CD4-positive, alpha-beta memory T cell (primary cell): ENCODE measurements at regions of chr5 and their contacts with region 1.

Region 1: GRCh38 chr5:150436141-150436680 is 13.3 kb downstream of the RPS14 start:
- DNase-seq: peak; percentile 86 to 92 (median 88)
- H3K4me3 ChIP-seq: no peak overlapping the region
- H3K4me3 Mint-ChIP-seq: peak overlapping the region; percentile 39 to 80 (median 67)
- H3K27ac ChIP-seq: no peak overlapping the region
- H3K27ac Mint-ChIP-seq: peak overlapping the region; percentile 14 to 92 (median 90)
- H3K4me1 ChIP-seq: peaks cover 8% of the 10 kb centered on the region
- H3K4me1 Mint-ChIP-seq: peaks cover 6 to 10% (median 8%) of the 10 kb centered on the region in 4 donors
- H3K27me3 ChIP-seq: no peaks in the 10 kb centered on the region
- H3K27me3 Mint-ChIP-seq: no peaks in the 10 kb centered on the region

Region 2: GRCh38 chr5:150085950-150086715 is 350.1 kb before region 1 on chr5 and contains the start of gene CSF1R:
- CTCF ChIA-PET with region 1: no interaction called
- POLR2A ChIA-PET with region 1: no interaction called
- intact Hi-C with region 1: no loop called
- DNase-seq: no peak
- H3K4me3 ChIP-seq: no peak within 1 kb of the TSS
- H3K4me3 Mint-ChIP-seq: no peak within 1 kb of the TSS
- H3K27ac ChIP-seq: no peak within 1 kb of the TSS
- H3K27ac Mint-ChIP-seq: no peak within 1 kb of the TSS
- H3K4me1 ChIP-seq: no peaks in the 10 kb centered on the region
- H3K4me1 Mint-ChIP-seq: peaks cover 0 to 2% (median 0%) of the 10 kb centered on the region in 4 donors
- H3K27me3 ChIP-seq: peaks cover 12% of the 10 kb centered on the region
- H3K27me3 Mint-ChIP-seq: peaks cover 30 to 44% of the 10 kb centered on the region in 2 donors
- total RNA-seq, gene CSF1R: 2.4 to 2.9 TPM

Region 3: DNA sequence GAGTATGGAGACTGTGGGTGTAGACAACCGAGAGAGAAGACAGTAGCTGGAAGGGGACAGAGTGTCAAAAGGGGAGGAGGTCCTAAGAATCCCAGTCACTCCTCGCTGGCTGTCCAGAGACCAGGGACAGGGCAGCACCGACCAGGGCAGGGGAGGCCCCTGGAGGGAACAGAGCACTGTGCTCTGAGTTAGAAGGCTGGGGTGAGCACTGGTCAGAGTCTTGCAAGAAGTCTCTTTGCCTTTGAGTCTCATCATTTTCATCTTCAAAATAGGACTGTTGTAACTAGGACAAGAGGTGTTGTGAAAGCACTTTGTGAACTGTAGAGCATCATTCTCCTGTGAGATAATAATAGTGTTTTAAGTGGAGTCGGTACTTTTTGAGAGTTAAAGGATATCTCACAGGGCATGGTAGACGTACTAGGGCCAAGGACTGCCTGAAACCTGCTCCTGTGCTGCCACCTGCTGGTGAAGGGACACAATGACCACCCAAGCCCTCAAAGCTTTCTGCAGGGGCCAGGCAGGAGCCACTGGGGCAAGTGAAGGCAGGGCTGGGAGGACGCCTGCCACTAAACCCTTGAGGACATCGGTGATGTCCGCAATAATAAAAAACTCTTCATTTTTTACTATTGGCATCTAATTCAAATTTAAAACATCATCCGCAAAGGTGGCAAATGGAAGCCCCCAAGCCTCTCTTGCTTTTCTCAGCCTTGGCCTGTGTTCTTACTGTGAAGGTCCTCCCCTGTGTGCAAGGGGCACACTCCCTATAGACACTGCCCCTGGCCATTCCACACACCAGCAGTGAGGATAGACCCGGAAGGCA is 218.1 kb before region 1 on chr5:
- CTCF ChIA-PET with region 1: no interaction called
- POLR2A ChIA-PET with region 1: no interaction called
- intact Hi-C with region 1: loop called (anchors 1 kb)
- DNase-seq: peak; percentile 67 to 73 (median 71)
- H3K4me3 ChIP-seq: no peak overlapping the region
- H3K4me3 Mint-ChIP-seq: no peak overlapping the region
- H3K27ac ChIP-seq: no peak overlapping the region
- H3K27ac Mint-ChIP-seq: no peak overlapping the region
- H3K4me1 ChIP-seq: no peaks in the 10 kb centered on the region
- H3K4me1 Mint-ChIP-seq: peaks cover 0 to 5% (median under 1%) of the 10 kb centered on the region in 4 donors
- H3K27me3 ChIP-seq: no peaks in the 10 kb centered on the region
- H3K27me3 Mint-ChIP-seq: peaks cover 0 to 4% of the 10 kb centered on the region in 2 donors

Region 4: GRCh38 chr5:150350524-150351344 is 85.5 kb before region 1 on chr5:
- CTCF ChIA-PET with region 1: interaction called, 14 read pairs
- POLR2A ChIA-PET with region 1: no interaction called
- intact Hi-C with region 1: no loop called
- DNase-seq: peak; percentile 33 to 52 (median 33)
- H3K4me3 ChIP-seq: no peak overlapping the region
- H3K4me3 Mint-ChIP-seq: peak overlapping the region in 2 of 8 donors; percentile 23 to 41
- H3K27ac ChIP-seq: no peak overlapping the region
- H3K27ac Mint-ChIP-seq: peak overlapping the region; percentile 45 to 93 (median 78)
- H3K4me1 ChIP-seq: peaks cover 13% of the 10 kb centered on the region
- H3K4me1 Mint-ChIP-seq: peaks cover 6 to 14% (median 8%) of the 10 kb centered on the region in 4 donors
- H3K27me3 ChIP-seq: no peaks in the 10 kb centered on the region
- H3K27me3 Mint-ChIP-seq: peaks cover 0 to 1% of the 10 kb centered on the region in 2 donors

Region 5: DNA sequence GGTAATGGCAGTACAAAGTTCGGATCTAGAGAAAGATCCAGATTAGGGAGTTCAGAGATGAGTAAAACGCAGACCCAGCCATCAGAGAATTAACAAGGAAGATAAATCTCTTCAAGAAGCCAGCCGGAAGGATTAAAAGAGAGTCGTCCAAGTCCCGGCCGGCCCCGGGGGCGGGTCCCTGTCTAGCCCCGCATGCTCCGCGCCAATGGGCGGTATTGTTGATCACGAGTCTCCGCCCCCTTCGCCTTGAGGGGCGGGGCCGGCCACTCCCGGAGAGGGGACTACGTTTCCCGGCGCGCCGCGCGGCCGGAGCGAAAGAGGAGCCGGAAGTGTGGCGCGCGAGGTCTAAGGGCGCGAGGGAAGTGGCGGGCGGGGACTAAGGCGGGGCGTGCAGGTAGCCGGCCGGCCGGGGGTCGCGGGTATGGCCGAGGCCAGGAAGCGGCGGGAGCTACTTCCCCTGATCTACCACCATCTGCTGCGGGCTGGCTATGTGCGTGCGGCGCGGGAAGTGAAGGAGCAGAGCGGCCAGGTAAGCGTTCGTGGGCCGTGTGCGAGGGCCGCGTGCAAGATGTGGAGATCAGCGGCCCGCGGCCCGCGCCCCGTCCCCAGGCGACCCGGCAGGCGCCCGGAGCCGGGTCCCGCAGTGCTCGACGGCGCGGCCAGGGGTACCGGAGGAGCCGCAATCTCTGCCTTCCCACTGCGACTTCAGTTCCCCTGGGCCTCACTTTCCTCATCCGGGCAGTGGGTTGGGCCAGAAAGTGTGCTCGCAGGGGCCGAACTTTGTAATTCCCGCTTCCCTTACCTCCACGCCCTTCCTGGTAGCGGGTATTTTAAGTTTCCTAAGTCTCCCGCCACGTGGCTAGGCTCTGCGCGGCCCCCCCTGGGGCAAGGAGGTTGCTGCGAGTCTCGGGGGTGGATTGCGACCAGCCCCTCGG is 78.6 kb before region 1 on chr5 and contains the start of gene TCOF1:
- CTCF ChIA-PET with region 1: interaction called, 5 read pairs
- POLR2A ChIA-PET with region 1: no interaction called
- intact Hi-C with region 1: loop called (anchors 1 kb)
- DNase-seq: peak; percentile 94 to 97 (median 96)
- H3K4me3 ChIP-seq: peak within 1 kb of the TSS; percentile 66 to 76
- H3K4me3 Mint-ChIP-seq: peak within 1 kb of the TSS; percentile 88 to 93 (median 91)
- H3K27ac ChIP-seq: peak within 1 kb of the TSS; percentile 70
- H3K27ac Mint-ChIP-seq: peak within 1 kb of the TSS; percentile 68 to 98 (median 94)
- H3K4me1 ChIP-seq: peaks cover 28% of the 10 kb centered on the region
- H3K4me1 Mint-ChIP-seq: peaks cover 30 to 59% (median 41%) of the 10 kb centered on the region in 4 donors
- H3K27me3 ChIP-seq: no peaks in the 10 kb centered on the region
- H3K27me3 Mint-ChIP-seq: peaks cover 0 to 1% of the 10 kb centered on the region in 2 donors
- total RNA-seq, gene TCOF1: 53.8 to 59.9 TPM

Region 6: GRCh38 chr5:150398722-150399523 is 37.3 kb before region 1 on chr5:
- CTCF ChIA-PET with region 1: interaction called, 13 read pairs
- POLR2A ChIA-PET with region 1: no interaction called
- intact Hi-C with region 1: loop called (anchors 1 kb)
- DNase-seq: no peak
- H3K4me3 ChIP-seq: no peak overlapping the region
- H3K4me3 Mint-ChIP-seq: no peak overlapping the region
- H3K27ac ChIP-seq: no peak overlapping the region
- H3K27ac Mint-ChIP-seq: peak overlapping the region in 6 of 7 donors; percentile 22 to 86 (median 76)
- H3K4me1 ChIP-seq: no peaks in the 10 kb centered on the region
- H3K4me1 Mint-ChIP-seq: peaks cover 0 to 8% (median 0%) of the 10 kb centered on the region in 4 donors
- H3K27me3 ChIP-seq: no peaks in the 10 kb centered on the region
- H3K27me3 Mint-ChIP-seq: no peaks in the 10 kb centered on the region

Region 7: DNA sequence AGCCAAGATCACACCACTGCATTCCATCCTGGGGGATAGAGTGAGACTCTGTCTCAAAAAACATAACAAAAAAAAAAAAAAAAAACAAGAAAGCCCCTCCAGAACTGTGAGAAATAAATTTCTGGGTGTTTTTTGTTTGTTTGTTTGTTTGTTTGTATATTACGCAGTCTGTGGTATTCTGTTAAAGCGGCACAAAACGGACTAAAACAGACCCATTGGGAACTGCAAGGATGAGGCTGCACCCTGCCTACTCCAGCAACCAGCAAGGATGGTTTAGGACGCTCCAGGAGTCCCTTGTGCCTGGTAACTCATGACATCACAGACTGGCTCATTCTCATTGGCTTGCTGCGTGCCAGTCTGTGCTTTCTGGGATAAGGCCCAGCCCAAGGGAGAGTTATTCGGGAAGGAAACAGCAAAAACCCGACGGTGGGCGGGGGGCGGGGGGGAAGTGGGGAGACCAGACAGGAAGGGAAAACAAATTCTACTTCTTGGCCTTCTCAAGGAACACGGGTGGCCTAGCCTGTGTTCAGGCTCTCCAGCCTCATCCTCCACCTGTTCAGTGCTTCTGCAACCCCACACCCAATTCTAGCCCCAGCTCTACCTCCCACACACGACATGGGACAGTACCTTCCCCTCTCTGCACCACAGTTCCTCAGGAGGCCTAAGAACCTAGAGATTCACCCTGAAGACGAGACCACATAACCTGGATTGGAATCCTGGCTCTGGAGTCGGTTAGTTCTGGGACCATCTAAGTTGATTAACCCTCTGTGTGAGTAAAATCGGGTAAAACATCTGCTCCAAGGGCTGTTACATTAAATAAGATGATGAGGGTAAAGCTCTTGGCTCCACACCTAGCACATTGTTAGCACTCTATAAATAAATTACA is 26.3 kb before region 1 on chr5:
- CTCF ChIA-PET with region 1: interaction called, 48 read pairs
- POLR2A ChIA-PET with region 1: interaction called, 9 read pairs
- intact Hi-C with region 1: loop called (anchors 1 kb)
- DNase-seq: peak in 4 of 5 donors; percentile 34 to 54 (median 48)
- H3K4me3 ChIP-seq: peak overlapping the region; percentile 34 to 78
- H3K4me3 Mint-ChIP-seq: peak overlapping the region; percentile 97 to 100 (median 99)
- H3K27ac ChIP-seq: peak overlapping the region; percentile 98
- H3K27ac Mint-ChIP-seq: peak overlapping the region; percentile 99 to 100 (median 99)
- H3K4me1 ChIP-seq: peaks cover 50% of the 10 kb centered on the region
- H3K4me1 Mint-ChIP-seq: peaks cover 26 to 57% (median 38%) of the 10 kb centered on the region in 4 donors
- H3K27me3 ChIP-seq: no peaks in the 10 kb centered on the region
- H3K27me3 Mint-ChIP-seq: no peaks in the 10 kb centered on the region

Region 8: DNA sequence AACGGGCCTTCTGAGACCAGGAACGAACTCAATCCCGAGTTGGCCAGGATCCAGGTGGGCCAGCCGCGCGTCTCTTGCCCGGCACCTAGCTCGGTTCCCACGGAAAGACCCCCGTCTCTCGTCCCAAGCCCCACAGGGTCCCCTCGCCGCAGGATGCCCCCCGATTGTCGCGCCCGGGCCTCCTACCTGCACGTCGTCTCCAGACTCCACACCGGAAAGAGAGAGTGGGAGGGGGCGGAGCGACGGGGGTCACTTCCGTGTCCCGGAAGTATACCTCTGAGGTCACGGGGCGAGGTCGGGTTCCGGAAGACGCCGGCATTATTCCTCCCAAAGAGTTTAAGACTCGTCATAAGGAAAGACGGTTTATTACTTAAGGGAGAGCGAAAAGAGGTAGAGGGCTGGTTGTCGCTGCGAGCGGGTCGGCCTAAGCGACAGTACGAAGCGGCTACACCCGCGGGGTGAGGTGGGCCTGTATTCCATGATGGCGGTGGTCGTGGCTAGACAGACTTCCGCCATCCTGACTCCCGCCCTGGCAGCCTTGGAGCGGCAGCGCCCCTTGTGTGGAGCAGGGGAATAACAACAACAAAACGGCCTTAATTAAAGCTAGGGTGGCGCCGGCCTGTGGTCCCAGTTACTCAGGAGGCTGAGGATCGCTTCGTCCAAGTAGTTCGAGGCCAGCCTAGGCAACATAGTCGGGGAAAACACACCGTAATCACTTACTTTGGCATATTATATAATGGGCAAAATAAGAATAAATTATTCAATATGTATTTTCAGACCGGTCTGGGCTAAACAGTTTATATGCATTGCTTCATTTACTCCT is 13.5 kb after region 1 on chr5 and contains the start of gene RPS14:
- CTCF ChIA-PET with region 1: interaction called, 30 read pairs
- POLR2A ChIA-PET with region 1: interaction called, 14 read pairs
- intact Hi-C with region 1: loop called (anchors 1 kb)
- DNase-seq: peak; percentile 96 to 98 (median 97)
- H3K4me3 ChIP-seq: peak within 1 kb of the TSS; percentile 87 to 99
- H3K4me3 Mint-ChIP-seq: peak within 1 kb of the TSS; percentile 92 to 100 (median 98)
- H3K27ac ChIP-seq: peak within 1 kb of the TSS; percentile 99
- H3K27ac Mint-ChIP-seq: peak within 1 kb of the TSS; percentile 99 to 100 (median 100)
- H3K4me1 ChIP-seq: peaks cover 28% of the 10 kb centered on the region
- H3K4me1 Mint-ChIP-seq: peaks cover 15 to 46% (median 36%) of the 10 kb centered on the region in 4 donors
- H3K27me3 ChIP-seq: no peaks in the 10 kb centered on the region
- H3K27me3 Mint-ChIP-seq: no peaks in the 10 kb centered on the region
- total RNA-seq, gene RPS14: 5,260 to 5,575 TPM